ENCODE measurements at regions of chr11 and their contacts with region 1.

Region 1: DNA sequence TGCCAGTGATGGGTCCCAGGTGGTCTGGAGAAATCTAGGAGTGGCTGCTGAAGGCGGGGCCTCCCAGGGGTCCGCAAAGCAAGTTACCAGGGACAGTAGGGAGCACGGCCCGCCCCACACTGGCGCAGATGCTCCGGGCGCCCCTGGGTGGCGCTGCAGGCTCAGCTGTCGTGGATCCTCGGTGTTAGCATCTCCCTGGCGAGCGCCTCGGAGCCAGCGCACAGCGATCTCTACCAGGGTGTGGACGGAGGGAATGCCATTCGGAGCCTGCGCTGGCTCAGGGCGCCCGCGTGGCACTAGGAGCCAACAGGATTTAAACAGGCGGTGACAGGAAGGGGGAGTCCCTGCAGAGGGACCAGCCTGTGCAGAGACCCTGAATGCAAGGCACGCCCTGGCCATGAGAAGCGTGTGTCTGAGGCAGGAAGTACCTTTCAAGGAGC is 20.2 kb downstream of the FADS3 start:
- DNase-seq: peak; percentile 92
- H3K4me3 Mint-ChIP-seq: peak overlapping the region; percentile 68
- H3K27ac Mint-ChIP-seq: peak overlapping the region; percentile 10
- H3K4me1 Mint-ChIP-seq: peaks cover 7% of the 10 kb centered on the region
- H3K27me3 Mint-ChIP-seq: no peaks in the 10 kb centered on the region

Region 2: DNA sequence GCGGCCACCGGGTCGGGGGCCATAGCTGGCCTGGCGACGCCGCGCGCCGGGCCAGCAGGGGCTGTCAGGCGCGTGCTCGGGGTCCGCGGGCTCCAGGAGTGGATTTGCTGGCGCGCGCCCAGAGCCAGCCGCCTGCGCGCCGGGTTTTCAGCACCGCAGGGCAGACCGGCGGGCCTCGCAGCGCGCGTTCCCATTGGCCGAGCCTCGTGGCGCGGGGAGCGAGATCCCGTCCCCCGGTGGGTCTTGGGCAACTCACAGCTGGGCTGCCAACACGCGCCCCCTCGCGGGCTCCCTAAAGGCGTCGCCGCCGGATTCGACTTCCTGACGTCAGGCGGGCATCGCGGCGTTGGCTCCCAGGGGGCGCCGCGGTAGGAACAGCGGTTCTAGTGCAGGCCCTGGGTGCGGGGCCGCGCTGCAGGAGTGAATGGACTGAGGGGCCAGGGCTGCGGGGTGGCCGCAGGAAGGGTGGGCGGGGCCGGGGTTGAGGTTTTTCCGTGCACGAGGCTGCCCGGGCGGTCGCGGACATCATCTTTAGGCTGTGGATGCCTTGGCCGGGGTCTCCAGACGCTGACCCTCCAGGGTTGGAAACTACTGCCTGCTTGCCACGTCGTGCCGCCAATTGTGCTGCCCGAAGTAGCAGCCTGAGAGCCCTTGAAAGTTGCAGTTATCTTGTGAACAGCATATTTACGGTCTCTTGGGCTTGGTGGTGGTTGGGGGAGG is 54.3 kb before region 1 on chr11 and contains the start of gene FADS1:
- intact Hi-C with region 1: no loop called
- DNase-seq: peak; percentile 95
- H3K4me3 Mint-ChIP-seq: peak within 1 kb of the TSS; percentile 97
- H3K27ac Mint-ChIP-seq: peak within 1 kb of the TSS; percentile 94
- H3K4me1 Mint-ChIP-seq: peaks cover 20% of the 10 kb centered on the region
- H3K27me3 Mint-ChIP-seq: peaks cover 2% of the 10 kb centered on the region
- total RNA-seq, gene FADS1: 92.5 and 94.7 TPM in 2 replicates

Region 3: DNA sequence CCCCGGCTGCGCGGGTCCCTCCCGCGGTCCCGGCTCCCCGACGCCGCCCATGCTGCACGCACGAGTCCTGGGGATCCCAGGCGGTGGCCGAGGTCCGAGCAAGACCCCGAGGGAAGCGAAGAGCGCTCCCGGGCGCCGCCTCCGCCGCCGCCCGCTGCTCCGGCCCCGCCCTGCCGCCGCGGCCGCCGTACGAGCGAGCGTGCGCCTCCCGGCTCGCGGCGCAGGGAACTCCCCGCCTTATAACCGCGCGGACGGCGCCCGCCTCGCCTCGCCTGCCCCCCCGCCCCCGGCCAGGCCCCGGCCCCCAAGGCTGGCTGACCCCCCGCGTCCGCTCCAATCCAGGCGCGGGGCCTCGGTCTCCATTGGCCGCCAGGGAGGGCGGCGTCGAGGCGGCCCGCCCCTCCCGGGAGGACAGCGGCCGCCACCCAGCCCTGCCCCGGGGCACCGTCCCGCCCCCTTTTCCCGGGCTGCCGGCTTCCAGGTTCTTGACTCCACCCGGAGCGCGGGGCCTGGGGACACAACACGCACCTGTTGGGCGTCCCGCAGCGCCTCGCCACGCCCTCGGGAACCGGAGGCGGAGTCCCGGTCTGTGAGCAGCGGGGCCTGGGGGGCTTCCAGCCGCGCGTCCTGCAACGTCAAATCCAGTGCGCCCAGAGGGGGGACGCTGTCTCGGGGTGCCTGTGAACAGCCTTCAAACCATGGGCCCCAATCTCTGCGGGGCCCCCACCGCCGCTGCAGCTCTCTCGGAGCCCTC is 20.3 kb after region 1 on chr11 and contains the start of gene FADS3:
- intact Hi-C with region 1: loop called (anchors 1 kb)
- DNase-seq: peak; percentile 92
- H3K4me3 Mint-ChIP-seq: peak within 1 kb of the TSS; percentile 83
- H3K27ac Mint-ChIP-seq: peak within 1 kb of the TSS; percentile 29
- H3K4me1 Mint-ChIP-seq: peaks cover 4% of the 10 kb centered on the region
- H3K27me3 Mint-ChIP-seq: peaks cover 13% of the 10 kb centered on the region
- total RNA-seq, gene FADS3: 13.5 and 15.6 TPM in 2 replicates

Region 4: DNA sequence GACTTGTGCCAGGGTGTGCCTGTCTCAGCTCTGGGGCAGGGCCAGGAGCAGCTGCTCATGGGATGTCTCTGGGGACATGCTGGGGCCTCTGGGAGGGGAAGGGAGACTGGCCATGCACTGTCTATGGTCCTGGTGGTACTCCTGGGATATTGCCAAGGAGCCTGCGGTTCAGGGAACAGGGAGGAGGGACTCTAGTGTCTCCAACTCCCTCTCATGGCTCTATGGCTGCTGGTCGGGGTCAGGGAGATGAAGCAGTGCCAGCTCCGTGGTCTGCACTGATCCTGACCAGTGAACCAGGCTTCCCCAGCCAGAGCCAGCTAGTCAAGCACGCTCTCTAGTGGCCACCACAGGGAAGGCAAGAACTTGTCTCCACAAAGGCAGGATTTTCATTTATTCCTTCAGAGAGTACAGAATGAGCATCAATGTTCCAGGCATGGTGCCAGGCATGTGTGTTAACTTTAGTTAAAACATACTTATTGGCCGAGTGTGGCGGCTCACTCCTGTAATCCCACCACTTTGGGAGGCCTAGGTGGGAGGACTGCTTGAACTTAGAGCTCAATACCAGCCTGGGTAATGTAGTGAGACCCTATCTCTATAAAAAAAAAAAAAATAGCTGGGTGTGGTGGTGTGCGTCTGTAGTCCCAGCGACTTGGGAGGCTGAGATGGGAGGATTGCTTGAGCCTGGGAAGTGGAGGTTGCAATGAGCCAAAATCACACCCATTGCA is 76.5 kb after region 1 on chr11:
- intact Hi-C with region 1: loop called (anchors 1 kb)
- DNase-seq: peak; percentile 91
- H3K4me3 Mint-ChIP-seq: no peak overlapping the region
- H3K27ac Mint-ChIP-seq: no peak overlapping the region
- H3K4me1 Mint-ChIP-seq: peaks cover 2% of the 10 kb centered on the region
- H3K27me3 Mint-ChIP-seq: peaks cover 8% of the 10 kb centered on the region

Measured in activated CD4-positive, alpha-beta T cell treated with anti-CD3 and anti-CD28 coated beads, Interleukin-2, amount 10 ng/mL, durations not matched to agents 24 days and 14 days (primary cell).